CD4-positive, alpha-beta memory T cell (primary cell): ENCODE measurements at regions of chr10 and their contacts with region 1.

Region 1: DNA sequence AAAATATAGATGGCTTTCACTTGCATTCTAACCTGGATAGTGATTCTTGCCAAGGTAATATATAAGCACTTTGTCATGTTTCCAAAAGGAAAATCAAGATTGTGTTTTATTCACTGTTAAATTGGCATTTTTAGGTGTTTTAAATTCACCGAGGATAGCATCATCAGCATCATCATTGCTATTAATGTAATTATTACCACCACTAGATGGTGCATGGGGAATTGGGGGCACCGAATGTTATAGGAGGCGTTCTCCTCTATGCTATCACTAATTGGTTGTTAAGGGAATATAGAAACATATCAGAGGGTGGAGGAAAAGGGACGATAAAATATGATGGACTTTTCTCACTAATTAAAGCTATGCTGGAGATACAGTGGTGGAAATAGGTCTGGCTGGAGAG is 95.5 kb downstream of the CELF2 start:
- DNase-seq: peak; percentile 58 to 69 (median 67)
- H3K4me3 ChIP-seq: no peak overlapping the region
- H3K4me3 Mint-ChIP-seq: peak overlapping the region in 7 of 8 donors; percentile 22 to 77 (median 58)
- H3K27ac ChIP-seq: no peak overlapping the region
- H3K27ac Mint-ChIP-seq: peak overlapping the region; percentile 3 to 90 (median 79)
- H3K4me1 ChIP-seq: peaks cover 13% of the 10 kb centered on the region
- H3K4me1 Mint-ChIP-seq: peaks cover 18 to 33% (median 23%) of the 10 kb centered on the region in 4 donors
- H3K27me3 ChIP-seq: no peaks in the 10 kb centered on the region
- H3K27me3 Mint-ChIP-seq: no peaks in the 10 kb centered on the region

Region 2: DNA sequence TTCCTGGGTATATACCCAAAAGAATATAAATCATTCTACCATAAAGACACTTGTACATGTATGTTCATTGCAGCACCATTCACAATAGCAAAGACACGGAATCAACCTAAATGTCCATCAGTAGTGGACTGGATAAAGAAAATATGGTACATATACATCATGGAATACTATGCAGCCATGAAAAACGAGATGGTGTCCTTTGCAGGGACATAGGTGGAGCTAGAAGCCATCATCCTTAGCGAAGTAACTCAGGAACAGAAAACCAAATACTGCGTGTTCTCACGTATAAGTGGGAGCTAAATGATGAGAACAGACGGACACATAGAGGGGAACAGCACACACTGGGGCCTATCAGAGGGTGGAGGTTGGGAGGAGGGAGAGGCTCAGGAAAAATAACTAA is 279.2 kb before region 1 on chr10:
- CTCF ChIA-PET with region 1: no interaction called
- POLR2A ChIA-PET with region 1: no interaction called
- intact Hi-C with region 1: no loop called
- DNase-seq: no peak
- H3K4me3 ChIP-seq: no peak overlapping the region
- H3K4me3 Mint-ChIP-seq: no peak overlapping the region
- H3K27ac ChIP-seq: no peak overlapping the region
- H3K27ac Mint-ChIP-seq: no peak overlapping the region
- H3K4me1 ChIP-seq: no peaks in the 10 kb centered on the region
- H3K4me1 Mint-ChIP-seq: no peaks in the 10 kb centered on the region
- H3K27me3 ChIP-seq: no peaks in the 10 kb centered on the region
- H3K27me3 Mint-ChIP-seq: peaks cover 0 to 15% of the 10 kb centered on the region in 2 donors

Region 3: DNA sequence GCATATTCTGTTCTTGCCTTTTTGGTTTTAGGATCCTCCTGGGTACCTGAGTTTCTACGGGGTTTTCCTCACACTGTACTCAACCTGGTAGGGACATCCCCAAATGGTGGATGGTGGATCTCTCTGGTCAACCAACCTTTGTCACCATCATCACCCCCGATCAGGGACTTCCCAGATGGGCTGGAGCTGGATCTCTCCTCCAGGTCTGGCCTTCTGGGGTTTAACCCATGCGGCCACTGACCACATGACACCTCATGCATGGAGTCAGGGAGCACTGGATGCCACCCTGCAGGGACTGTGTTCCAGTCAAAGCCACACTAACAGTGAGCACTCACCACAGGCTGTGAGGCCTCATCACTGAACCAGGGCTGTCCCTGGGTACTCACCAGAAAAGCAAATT is 15.5 kb before region 1 on chr10:
- CTCF ChIA-PET with region 1: interaction called, 12 read pairs
- POLR2A ChIA-PET with region 1: interaction called, 3 read pairs
- intact Hi-C with region 1: no loop called
- DNase-seq: no peak
- H3K4me3 ChIP-seq: no peak overlapping the region
- H3K4me3 Mint-ChIP-seq: no peak overlapping the region
- H3K27ac ChIP-seq: no peak overlapping the region
- H3K27ac Mint-ChIP-seq: peak overlapping the region in 1 of 7 donors; percentile 17
- H3K4me1 ChIP-seq: no peaks in the 10 kb centered on the region
- H3K4me1 Mint-ChIP-seq: peaks cover 0 to 1% (median under 1%) of the 10 kb centered on the region in 4 donors
- H3K27me3 ChIP-seq: no peaks in the 10 kb centered on the region
- H3K27me3 Mint-ChIP-seq: peaks cover 3 to 12% of the 10 kb centered on the region in 2 donors

Region 4: GRCh38 chr10:11145495-11145855 is 32.3 kb after region 1 on chr10:
- CTCF ChIA-PET with region 1: interaction called, 34 read pairs
- POLR2A ChIA-PET with region 1: interaction called, 30 read pairs
- intact Hi-C with region 1: loop called (anchors 1 kb)
- DNase-seq: peak; percentile 74 to 88 (median 79)
- H3K4me3 ChIP-seq: peak overlapping the region in 1 of 2 donors; percentile 41
- H3K4me3 Mint-ChIP-seq: peak overlapping the region; percentile 68 to 88 (median 78)
- H3K27ac ChIP-seq: peak overlapping the region; percentile 93
- H3K27ac Mint-ChIP-seq: peak overlapping the region; percentile 91 to 100 (median 99)
- H3K4me1 ChIP-seq: peaks cover 98% of the 10 kb centered on the region
- H3K4me1 Mint-ChIP-seq: peaks cover 81 to 98% (median 91%) of the 10 kb centered on the region in 4 donors
- H3K27me3 ChIP-seq: no peaks in the 10 kb centered on the region
- H3K27me3 Mint-ChIP-seq: no peaks in the 10 kb centered on the region

Region 5: DNA sequence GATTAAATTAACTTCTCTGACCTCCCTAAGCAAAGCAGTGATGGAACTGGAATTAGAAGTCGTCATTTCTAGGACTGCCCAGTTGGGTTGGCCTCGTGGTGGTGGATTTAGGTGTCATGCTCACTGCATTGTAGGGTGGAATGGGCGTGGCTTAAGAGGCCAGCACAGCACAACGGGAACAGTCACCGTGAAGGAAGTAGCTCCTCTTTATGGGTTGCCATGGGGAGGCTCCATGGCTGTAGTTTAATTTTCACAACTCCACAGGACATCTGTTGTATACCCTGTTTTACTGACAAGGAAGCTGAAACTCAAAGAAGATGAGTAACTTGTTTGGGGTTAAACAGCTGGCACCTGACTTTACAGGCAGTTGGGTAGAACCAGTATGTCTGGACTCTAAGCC is 112.8 kb after region 1 on chr10:
- CTCF ChIA-PET with region 1: interaction called, 4 read pairs
- POLR2A ChIA-PET with region 1: no interaction called
- intact Hi-C with region 1: loop called (anchors 1 kb)
- DNase-seq: peak; percentile 46 to 86 (median 50)
- H3K4me3 ChIP-seq: peak overlapping the region in 1 of 2 donors; percentile 36
- H3K4me3 Mint-ChIP-seq: peak overlapping the region in 7 of 8 donors; percentile 64 to 84 (median 75)
- H3K27ac ChIP-seq: peak overlapping the region; percentile 58
- H3K27ac Mint-ChIP-seq: peak overlapping the region; percentile 90 to 98 (median 94)
- H3K4me1 ChIP-seq: peaks cover 96% of the 10 kb centered on the region
- H3K4me1 Mint-ChIP-seq: peaks cover 81 to 99% (median 93%) of the 10 kb centered on the region in 4 donors
- H3K27me3 ChIP-seq: no peaks in the 10 kb centered on the region
- H3K27me3 Mint-ChIP-seq: no peaks in the 10 kb centered on the region

Region 6: GRCh38 chr10:11472158-11472753 is 359.1 kb after region 1 on chr10:
- CTCF ChIA-PET with region 1: interaction called, 4 read pairs
- POLR2A ChIA-PET with region 1: no interaction called
- intact Hi-C with region 1: loop called (anchors 1 kb)
- DNase-seq: peak; percentile 59 to 70 (median 62)
- H3K4me3 ChIP-seq: no peak overlapping the region
- H3K4me3 Mint-ChIP-seq: no peak overlapping the region
- H3K27ac ChIP-seq: no peak overlapping the region
- H3K27ac Mint-ChIP-seq: no peak overlapping the region
- H3K4me1 ChIP-seq: no peaks in the 10 kb centered on the region
- H3K4me1 Mint-ChIP-seq: peaks cover 0 to 2% (median 0%) of the 10 kb centered on the region in 4 donors
- H3K27me3 ChIP-seq: no peaks in the 10 kb centered on the region
- H3K27me3 Mint-ChIP-seq: peaks cover 0 to 2% of the 10 kb centered on the region in 2 donors